ENCODE measurements at regions of chr17 and their contacts with region 1.

Region 1: GRCh38 chr17:39980351-39981206 is at the start of gene PSMD3:
- DNase-seq: peak; percentile 99
- H3K4me3 Mint-ChIP-seq: peak within 1 kb of the TSS; percentile 91
- H3K27ac Mint-ChIP-seq: peak within 1 kb of the TSS; percentile 92
- H3K4me1 Mint-ChIP-seq: peaks cover 28% of the 10 kb centered on the region
- H3K27me3 Mint-ChIP-seq: peaks cover 8% of the 10 kb centered on the region
- total RNA-seq, gene PSMD3: 199 and 204 TPM in 2 replicates

Region 2: GRCh38 chr17:39621523-39622379 is 358.8 kb before region 1 on chr17:
- intact Hi-C with region 1: loop called (anchors 1 kb)
- DNase-seq: peak; percentile 97
- H3K4me3 Mint-ChIP-seq: peak overlapping the region; percentile 76
- H3K27ac Mint-ChIP-seq: peak overlapping the region; percentile 62
- H3K4me1 Mint-ChIP-seq: peaks cover 17% of the 10 kb centered on the region
- H3K27me3 Mint-ChIP-seq: peaks cover 57% of the 10 kb centered on the region

Region 3: GRCh38 chr17:39730095-39730921 is 250.3 kb before region 1 on chr17 and contains the start of gene MIEN1:
- intact Hi-C with region 1: loop called (anchors 1 kb)
- DNase-seq: peak; percentile 99
- H3K4me3 Mint-ChIP-seq: peak within 1 kb of the TSS; percentile 95
- H3K27ac Mint-ChIP-seq: peak within 1 kb of the TSS; percentile 92
- H3K4me1 Mint-ChIP-seq: peaks cover 16% of the 10 kb centered on the region
- H3K27me3 Mint-ChIP-seq: peaks cover 2% of the 10 kb centered on the region
- total RNA-seq, gene MIEN1: 29.8 and 33.4 TPM in 2 replicates

Region 4: GRCh38 chr17:39952680-39953470 is 27.7 kb before region 1 on chr17:
- intact Hi-C with region 1: loop called (anchors 1 kb)
- DNase-seq: peak; percentile 94
- H3K4me3 Mint-ChIP-seq: peak overlapping the region; percentile 86
- H3K27ac Mint-ChIP-seq: peak overlapping the region; percentile 87
- H3K4me1 Mint-ChIP-seq: peaks cover 31% of the 10 kb centered on the region
- H3K27me3 Mint-ChIP-seq: peaks cover 2% of the 10 kb centered on the region

Region 5: DNA sequence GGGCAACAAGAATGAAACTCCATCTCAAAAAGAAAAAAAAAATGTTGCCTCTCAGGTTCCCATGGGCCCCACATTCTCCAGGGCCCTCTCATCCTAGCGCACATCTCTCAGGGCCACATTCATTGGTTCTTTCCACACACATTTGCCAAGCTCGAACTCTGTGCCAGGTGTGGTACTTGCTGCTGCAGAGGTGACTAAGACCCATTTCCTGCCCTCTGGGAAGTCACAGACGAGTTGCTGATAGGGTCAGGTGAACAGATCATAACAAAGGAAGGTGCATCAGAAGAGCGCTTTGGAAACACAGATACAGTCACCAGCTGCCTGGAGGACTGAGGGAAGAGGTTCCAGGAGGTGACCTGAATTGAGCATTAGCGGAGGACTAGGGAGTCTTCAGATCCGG is 16.8 kb before region 1 on chr17:
- intact Hi-C with region 1: loop called (anchors 1 kb)
- DNase-seq: peak; percentile 72
- H3K4me3 Mint-ChIP-seq: peak overlapping the region; percentile 5
- H3K27ac Mint-ChIP-seq: peak overlapping the region; percentile 38
- H3K4me1 Mint-ChIP-seq: peaks cover 21% of the 10 kb centered on the region
- H3K27me3 Mint-ChIP-seq: no peaks in the 10 kb centered on the region

Region 6: DNA sequence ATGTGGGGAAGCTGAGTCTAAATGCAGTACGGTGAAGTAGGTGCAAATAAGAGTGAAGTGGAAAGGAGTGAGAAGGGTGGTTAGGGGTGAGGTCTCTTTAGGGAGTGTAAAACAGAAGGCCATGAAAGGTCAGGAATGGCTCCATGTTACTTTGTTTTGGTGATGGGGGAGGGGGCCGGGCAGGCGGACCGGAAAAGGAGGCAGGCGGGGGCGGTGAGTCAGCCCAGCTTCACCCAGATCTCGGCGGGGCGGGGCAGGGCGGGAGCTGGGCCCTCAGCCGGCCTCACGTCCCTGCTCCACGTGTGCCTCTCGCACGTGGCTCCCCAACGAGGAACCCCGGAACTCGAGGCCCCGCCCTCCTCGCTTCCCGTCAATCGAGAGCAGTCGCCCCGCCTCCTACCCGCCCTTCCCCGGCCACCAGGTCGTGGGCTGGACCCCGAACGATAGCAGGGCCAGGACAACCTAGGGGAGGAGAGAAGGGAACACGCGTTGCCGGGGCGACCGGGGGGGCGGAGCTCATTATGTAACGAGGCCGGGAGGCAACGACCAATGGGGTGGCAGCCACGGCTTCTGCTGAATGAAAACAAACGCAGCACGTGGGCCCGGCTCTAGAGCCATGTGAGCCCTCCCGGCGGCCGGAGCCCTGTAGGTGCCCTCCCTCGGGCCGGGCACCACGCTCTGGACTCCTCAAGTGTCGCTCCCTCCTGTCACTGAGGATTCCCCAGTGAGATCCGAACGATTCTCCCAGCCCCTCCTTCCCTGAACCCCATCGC is 118.5 kb after region 1 on chr17:
- intact Hi-C with region 1: loop called (anchors 1 kb)
- DNase-seq: peak; percentile 97
- H3K4me3 Mint-ChIP-seq: peak overlapping the region; percentile 94
- H3K27ac Mint-ChIP-seq: peak overlapping the region; percentile 86
- H3K4me1 Mint-ChIP-seq: peaks cover 73% of the 10 kb centered on the region
- H3K27me3 Mint-ChIP-seq: peaks cover 4% of the 10 kb centered on the region